Left cardiac atrium (tissue), 4 donors: ENCODE measurements at regions of chr1 and their contacts with region 1.

Region 1: GRCh38 chr1:983799-984473 is 2.0 kb upstream of the PERM1 start:
- DNase-seq: peak; percentile 63
- ATAC-seq: peak; percentile 7 to 23

Region 2: GRCh38 chr1:1059494-1060280 is 75.8 kb after region 1 on chr1:
- intact Hi-C with region 1: loop called (anchors 2 to 5 kb)
- DNase-seq: peak; percentile 90
- ATAC-seq: peak; percentile 92 to 93

Region 3: DNA sequence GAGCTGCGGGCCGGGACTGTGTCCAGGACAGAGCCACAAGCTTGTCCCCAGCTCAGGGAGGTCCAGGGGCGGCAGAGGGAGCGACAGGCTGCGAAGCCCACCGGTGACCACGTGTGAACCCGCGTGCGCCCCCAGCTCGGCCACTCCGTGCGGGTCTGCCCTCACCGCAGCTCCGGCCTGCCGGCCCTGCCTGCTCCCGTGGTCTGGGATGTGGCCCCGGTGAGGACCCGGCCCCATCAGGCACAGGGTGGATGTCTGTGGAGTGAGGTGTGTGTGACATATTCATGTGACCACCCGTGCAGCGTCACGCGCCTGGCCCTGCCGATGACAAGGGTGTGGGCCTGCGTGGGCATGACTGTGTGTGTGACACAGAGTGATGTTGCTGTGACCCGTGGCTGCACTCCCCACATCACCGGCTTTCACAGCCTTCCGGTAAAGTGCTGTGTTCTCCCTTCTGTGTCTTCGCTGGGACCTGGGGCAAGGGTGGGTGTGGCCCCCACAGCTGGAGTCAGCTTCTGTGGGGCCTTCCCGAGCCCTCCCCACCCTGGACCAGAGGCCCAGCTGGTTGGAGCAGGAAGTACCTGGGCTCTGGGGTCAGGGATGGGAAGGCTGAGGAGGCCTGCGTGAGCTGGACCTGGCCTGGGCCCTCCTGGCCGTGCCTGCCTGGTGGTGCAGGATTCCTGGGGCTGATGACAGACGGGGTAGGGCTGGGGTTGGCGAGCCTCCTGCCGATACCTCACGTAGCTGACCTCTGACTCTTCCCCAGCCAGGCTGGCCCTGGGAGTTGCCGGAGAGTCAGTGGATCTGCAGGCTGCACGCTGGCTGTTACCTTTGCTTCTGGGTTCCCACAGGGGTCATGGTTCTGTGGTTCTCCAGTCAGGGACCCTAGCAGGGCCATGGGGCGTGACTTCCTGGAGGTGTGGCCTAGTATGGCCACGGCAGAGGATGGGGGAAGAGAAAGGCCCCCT is 86.1 kb after region 1 on chr1:
- intact Hi-C with region 1: no loop called
- DNase-seq: no peak
- ATAC-seq: peak in 1 of 2 donors; percentile 18